ENCODE measurements at regions of chr9 and their contacts with region 1.

Region 1: DNA sequence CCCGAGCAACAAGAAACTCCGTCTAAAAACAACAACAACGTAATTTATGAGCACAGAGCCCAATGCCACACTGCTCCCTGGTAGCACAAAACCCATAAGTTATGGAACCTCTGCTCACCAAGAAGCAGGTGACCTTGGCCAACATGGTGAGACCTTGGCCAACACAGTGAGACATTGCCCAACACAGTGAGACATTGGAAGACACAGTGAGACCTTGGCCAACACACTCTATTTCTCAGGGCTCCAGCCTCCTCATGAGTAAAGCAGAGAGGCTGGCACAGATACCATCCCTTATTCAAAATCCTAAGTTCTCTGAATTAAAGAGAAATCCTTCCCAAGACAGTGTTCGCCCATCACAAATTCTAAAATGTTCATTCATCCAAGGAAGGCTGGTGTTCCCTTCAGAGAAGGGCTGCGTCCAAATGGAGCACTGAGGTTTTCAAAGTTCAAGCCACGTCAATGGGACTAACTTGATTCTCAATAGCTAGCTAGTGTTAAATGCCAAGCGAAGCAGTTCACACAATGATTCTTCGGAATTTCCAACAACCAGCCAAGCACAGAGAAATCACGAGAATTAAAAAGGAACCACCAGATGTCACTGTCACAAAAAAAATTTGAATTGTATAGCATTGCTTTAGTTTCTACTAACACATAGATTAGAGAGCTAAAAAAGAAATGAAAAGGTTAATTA is 29.5 kb downstream of the TTC39B start:
- DNase-seq: no peak
- ATAC-seq: no peak
- H3K4me3 ChIP-seq: no peak overlapping the region
- H3K27ac ChIP-seq: no peak overlapping the region
- H3K4me1 ChIP-seq: no peaks in the 10 kb centered on the region
- H3K27me3 ChIP-seq: no peaks in the 10 kb centered on the region
- CTCF ChIP-seq: peak in 11 of 12 donors; percentile 13 to 56 (median 40)
- POLR2A ChIP-seq: no peak

Region 2: GRCh38 chr9:15529566-15530324 is 252.2 kb after region 1 on chr9:
- intact Hi-C with region 1: loop called in 1 of 10 experiments (anchors 10 kb)
- DNase-seq: no peak
- ATAC-seq: no peak
- H3K4me3 ChIP-seq: no peak overlapping the region
- H3K27ac ChIP-seq: no peak overlapping the region
- H3K4me1 ChIP-seq: no peaks in the 10 kb centered on the region
- H3K27me3 ChIP-seq: no peaks in the 10 kb centered on the region
- CTCF ChIP-seq: no peak
- POLR2A ChIP-seq: no peak

Region 3: GRCh38 chr9:15612962-15613361 is 335.4 kb after region 1 on chr9:
- intact Hi-C with region 1: loop called in 7 of 10 experiments (anchors 5 to 10 kb)
- DNase-seq: no peak
- ATAC-seq: no peak
- H3K4me3 ChIP-seq: no peak overlapping the region
- H3K27ac ChIP-seq: no peak overlapping the region
- H3K4me1 ChIP-seq: no peaks in the 10 kb centered on the region
- H3K27me3 ChIP-seq: no peaks in the 10 kb centered on the region
- CTCF ChIP-seq: no peak
- POLR2A ChIP-seq: no peak

Measured in heart left ventricle (tissue), 16 donors.